ENCODE measurements at regions of chr9 and their contacts with region 1.

Region 1: DNA sequence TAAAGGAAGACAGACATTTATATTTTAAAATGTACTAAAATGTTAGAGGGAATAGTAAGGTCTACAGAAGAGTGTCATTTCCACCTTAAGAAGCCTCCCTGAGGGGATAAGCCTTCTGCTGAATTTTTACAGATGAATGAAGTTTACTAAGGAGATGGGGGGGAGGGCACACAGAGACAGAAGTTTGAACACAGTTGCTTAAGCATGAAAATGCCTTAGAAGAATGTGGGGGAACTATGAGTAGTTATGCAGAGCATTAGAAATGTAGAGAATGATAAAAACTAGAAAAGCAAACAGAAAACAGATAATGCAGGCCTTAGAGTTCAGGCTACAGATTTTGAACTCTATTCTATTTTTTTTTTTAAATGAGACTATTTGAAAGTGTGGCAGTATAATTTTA is 232.2 kb upstream of the VLDLR start:
- DNase-seq: no peak
- ATAC-seq: no peak
- H3K4me3 ChIP-seq: no peak overlapping the region
- H3K27ac ChIP-seq: no peak overlapping the region
- H3K4me1 ChIP-seq: no peaks in the 10 kb centered on the region
- H3K27me3 ChIP-seq: no peaks in the 10 kb centered on the region
- CTCF ChIP-seq: no peak
- EP300 ChIP-seq: no peak
- POLR2A ChIP-seq: no peak
- RAD21 ChIP-seq: no peak

Region 2: DNA sequence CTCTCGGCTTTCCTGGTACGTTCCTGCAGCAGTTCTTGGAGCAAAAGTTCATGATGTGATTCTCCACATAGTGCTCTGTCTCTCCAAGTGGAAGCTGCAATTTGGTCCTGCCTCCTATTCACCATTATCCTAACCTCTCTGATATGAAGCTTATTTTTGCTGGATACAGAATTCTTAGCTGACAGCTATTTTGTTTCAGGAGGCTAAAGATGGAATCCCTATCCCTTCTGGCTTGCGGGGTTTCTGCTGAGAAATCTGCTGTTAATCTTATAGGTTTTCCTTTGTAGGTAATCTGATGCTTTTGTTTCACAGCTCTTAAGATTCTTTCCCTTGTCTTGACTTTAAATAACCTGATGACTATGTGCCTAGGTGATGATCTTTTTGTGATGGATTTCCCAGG is 50.6 kb after region 1 on chr9:
- CTCF ChIA-PET with region 1: no interaction called
- POLR2A ChIA-PET with region 1: no interaction called
- in situ Hi-C with region 1: no loop called
- intact Hi-C with region 1: loop called (anchors 5 kb)
- DNase-seq: no peak
- ATAC-seq: no peak
- H3K4me3 ChIP-seq: no peak overlapping the region
- H3K27ac ChIP-seq: no peak overlapping the region
- H3K4me1 ChIP-seq: no peaks in the 10 kb centered on the region
- H3K27me3 ChIP-seq: no peaks in the 10 kb centered on the region
- CTCF ChIP-seq: no peak
- EP300 ChIP-seq: no peak
- POLR2A ChIP-seq: no peak
- RAD21 ChIP-seq: no peak

Region 3: DNA sequence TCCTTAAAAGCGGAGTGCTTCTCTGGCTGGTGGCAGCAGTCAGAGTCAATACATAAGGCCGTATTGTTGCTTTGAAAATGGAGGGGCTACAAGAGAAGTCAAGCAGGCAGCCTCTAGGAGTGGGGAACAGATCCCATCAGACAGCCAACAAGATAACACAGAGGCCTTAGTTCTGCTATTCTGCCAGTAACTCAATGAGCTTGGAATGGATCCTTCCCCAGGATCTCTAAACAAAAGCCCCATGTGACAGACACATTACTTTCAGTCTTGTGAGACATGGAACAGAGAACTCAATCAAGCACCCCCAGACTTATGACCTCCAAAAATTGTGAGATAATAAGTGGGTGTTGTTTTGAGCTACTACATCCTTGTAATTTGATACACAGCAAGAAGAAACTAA is 977.8 kb after region 1 on chr9:
- CTCF ChIA-PET with region 1: no interaction called
- POLR2A ChIA-PET with region 1: no interaction called
- in situ Hi-C with region 1: no loop called
- intact Hi-C with region 1: no loop called
- DNase-seq: no peak
- ATAC-seq: no peak
- H3K4me3 ChIP-seq: no peak overlapping the region
- H3K27ac ChIP-seq: no peak overlapping the region
- H3K4me1 ChIP-seq: no peaks in the 10 kb centered on the region
- H3K27me3 ChIP-seq: no peaks in the 10 kb centered on the region
- CTCF ChIP-seq: no peak
- EP300 ChIP-seq: no peak
- POLR2A ChIP-seq: no peak
- RAD21 ChIP-seq: no peak